ENCODE measurements at regions of chr7 and their contacts with region 1.

Region 1: GRCh38 chr7:84553711-84554110 is 359.1 kb upstream of the SEMA3A start:
- DNase-seq: no peak
- ATAC-seq: no peak
- H3K4me3 ChIP-seq: no peak overlapping the region
- H3K27ac ChIP-seq: no peak overlapping the region
- H3K4me1 ChIP-seq: no peaks in the 10 kb centered on the region
- H3K27me3 ChIP-seq: no peaks in the 10 kb centered on the region

Region 2: GRCh38 chr7:84058311-84059076 is 495.2 kb before region 1 on chr7:
- intact Hi-C with region 1: loop called in 1 of 2 experiments (anchors 10 kb)
- DNase-seq: no peak
- ATAC-seq: no peak
- H3K4me3 ChIP-seq: no peak overlapping the region
- H3K27ac ChIP-seq: no peak overlapping the region
- H3K4me1 ChIP-seq: no peaks in the 10 kb centered on the region
- H3K27me3 ChIP-seq: no peaks in the 10 kb centered on the region

Region 3: DNA sequence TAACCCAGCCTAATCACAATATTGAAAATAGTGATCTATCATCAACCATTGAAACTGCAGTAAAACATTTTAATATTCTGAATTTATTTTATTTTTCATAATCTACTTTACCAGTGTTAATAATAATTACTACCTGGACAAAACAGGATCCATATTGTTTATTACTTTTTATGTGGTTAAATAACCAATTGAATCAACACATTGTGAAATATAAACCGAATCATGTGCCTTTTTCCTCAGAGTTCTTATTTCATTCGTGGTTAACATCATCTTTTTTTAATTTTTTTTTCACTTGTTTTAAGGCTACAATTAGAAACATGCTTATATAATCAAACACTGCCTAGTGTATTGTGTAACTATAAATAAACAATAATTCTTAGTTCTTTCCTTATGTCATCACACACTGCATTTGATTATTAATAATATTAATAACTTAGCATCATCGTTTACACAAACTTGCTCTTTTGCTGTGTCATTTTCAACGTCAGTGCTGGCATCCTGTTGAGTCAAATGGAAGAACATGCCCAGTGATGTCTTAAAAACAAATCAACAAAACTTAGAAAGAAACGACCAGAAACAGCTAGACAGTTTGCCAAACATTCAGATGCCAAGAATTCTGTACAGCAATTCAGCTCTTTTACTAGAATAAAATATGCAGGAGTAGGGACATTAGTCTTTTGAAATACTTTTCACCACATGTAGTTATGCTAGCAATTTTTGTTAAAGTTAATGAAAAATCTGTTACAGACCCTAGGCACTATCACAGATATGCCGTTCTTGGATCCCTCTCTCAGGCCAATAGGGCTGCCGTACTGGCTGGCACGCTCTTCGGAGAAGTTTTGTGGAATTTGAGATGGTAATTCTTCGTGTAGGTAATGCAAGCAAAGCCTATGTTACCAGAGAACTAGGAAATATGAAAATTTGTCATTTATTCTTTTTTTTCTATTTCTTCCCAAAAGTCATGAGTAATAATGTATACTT is 28.7 kb before region 1 on chr7:
- intact Hi-C with region 1: no loop called
- DNase-seq: peak in 1 of 2 donors; percentile 46
- ATAC-seq: no peak
- H3K4me3 ChIP-seq: no peak overlapping the region
- H3K27ac ChIP-seq: no peak overlapping the region
- H3K4me1 ChIP-seq: peaks cover 0 to 2% of the 10 kb centered on the region in 2 donors
- H3K27me3 ChIP-seq: no peaks in the 10 kb centered on the region

Region 4: GRCh38 chr7:84589012-84589411 is 35.3 kb after region 1 on chr7:
- intact Hi-C with region 1: no loop called
- DNase-seq: no peak
- ATAC-seq: no peak
- H3K4me3 ChIP-seq: no peak overlapping the region
- H3K27ac ChIP-seq: no peak overlapping the region
- H3K4me1 ChIP-seq: no peaks in the 10 kb centered on the region
- H3K27me3 ChIP-seq: no peaks in the 10 kb centered on the region

Region 5: DNA sequence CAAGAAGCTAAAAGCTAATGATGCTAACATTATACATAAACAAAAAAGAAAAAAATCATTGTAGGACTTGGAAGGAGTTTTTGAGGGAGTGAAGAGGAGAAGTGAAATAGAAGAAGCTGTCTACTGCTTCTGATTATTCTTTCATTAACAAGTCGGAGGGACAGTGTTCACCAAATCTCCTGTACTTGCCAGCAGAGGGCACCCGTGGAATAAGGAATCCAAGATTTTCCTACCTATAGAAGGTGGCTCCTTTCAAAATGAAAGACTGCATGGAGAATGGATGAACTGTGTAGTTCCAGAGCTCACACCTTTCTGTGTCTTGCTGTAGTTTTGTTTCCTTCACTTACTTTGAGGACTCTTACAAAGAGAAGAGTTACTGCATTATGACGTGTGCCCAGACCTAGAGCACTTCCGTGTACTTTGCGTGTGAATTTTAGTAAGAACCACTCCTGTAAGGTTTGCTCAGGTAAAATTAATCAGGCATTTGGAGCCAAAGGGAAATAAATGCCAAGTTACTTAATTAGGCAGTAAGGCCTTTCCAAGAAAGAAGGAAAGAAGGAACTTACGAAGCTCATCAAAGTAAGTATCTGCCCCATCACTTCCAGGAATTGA is 488.0 kb after region 1 on chr7:
- intact Hi-C with region 1: no loop called
- DNase-seq: peak; percentile 68 to 84
- ATAC-seq: peak; percentile 74
- H3K4me3 ChIP-seq: no peak overlapping the region
- H3K27ac ChIP-seq: no peak overlapping the region
- H3K4me1 ChIP-seq: no peaks in the 10 kb centered on the region
- H3K27me3 ChIP-seq: no peaks in the 10 kb centered on the region

Measured in aorta (tissue), 5 donors.